ENCODE measurements at regions of chr17 and their contacts with region 1.

Region 1: GRCh38 chr17:59753522-59754467 is 46.3 kb downstream of the VMP1 start:
- DNase-seq: peak; percentile 92
- H3K4me3 ChIP-seq: no peak overlapping the region
- H3K27ac ChIP-seq: peak overlapping the region; percentile 72
- H3K4me1 ChIP-seq: peaks cover 26% of the 10 kb centered on the region
- H3K27me3 ChIP-seq: no peaks in the 10 kb centered on the region
- CTCF ChIP-seq: peak; percentile 79

Region 2: DNA sequence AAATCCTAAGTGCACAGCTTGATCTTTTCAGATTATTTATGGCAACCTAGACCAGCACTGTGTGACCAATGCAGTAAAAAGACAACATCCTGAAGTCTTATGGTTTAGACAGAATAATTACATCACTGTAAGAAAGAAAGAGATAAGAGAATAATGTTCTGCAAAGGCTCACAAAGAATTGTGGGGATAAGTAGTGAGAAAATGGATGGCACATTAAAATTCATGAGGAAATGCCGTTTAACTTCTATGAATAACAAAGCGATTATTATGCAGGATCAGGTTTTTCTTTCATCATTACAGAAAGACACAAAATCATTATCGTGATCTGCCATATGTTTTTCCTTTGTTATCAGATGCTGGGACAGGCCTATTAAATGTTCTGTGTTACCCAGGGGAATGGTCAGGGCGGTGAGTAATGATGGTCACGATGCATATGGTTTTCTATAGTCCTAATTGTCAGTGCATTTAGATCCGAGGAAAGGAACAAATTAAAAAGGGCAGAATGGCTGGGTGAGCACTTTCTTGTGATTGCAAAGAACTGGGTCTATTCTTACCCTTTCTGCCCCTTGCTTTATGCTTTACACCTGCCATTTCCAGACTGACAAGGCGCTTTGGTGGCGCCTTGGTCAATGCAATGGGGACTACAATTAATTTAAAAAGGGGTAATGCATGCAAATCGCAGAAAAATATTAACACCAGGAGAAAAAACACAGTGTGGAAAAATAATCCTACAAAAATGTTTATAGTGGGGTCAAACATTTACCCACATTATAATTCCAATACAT is 206.5 kb before region 1 on chr17:
- CTCF ChIA-PET with region 1: no interaction called
- POLR2A ChIA-PET with region 1: no interaction called
- intact Hi-C with region 1: no loop called
- DNase-seq: peak; percentile 95
- H3K4me3 ChIP-seq: no peak overlapping the region
- H3K27ac ChIP-seq: no peak overlapping the region
- H3K4me1 ChIP-seq: peaks cover 10% of the 10 kb centered on the region
- H3K27me3 ChIP-seq: peaks cover 21% of the 10 kb centered on the region
- CTCF ChIP-seq: no peak

Region 3: GRCh38 chr17:59837308-59838051 is 83.7 kb after region 1 on chr17:
- CTCF ChIA-PET with region 1: interaction called, 24 read pairs
- POLR2A ChIA-PET with region 1: interaction called, 7 read pairs
- intact Hi-C with region 1: loop called (anchors 1 kb)
- DNase-seq: peak; percentile 100
- H3K4me3 ChIP-seq: peak overlapping the region; percentile 55
- H3K27ac ChIP-seq: peak overlapping the region; percentile 100
- H3K4me1 ChIP-seq: peaks cover 34% of the 10 kb centered on the region
- H3K27me3 ChIP-seq: no peaks in the 10 kb centered on the region
- CTCF ChIP-seq: no peak

Region 4: DNA sequence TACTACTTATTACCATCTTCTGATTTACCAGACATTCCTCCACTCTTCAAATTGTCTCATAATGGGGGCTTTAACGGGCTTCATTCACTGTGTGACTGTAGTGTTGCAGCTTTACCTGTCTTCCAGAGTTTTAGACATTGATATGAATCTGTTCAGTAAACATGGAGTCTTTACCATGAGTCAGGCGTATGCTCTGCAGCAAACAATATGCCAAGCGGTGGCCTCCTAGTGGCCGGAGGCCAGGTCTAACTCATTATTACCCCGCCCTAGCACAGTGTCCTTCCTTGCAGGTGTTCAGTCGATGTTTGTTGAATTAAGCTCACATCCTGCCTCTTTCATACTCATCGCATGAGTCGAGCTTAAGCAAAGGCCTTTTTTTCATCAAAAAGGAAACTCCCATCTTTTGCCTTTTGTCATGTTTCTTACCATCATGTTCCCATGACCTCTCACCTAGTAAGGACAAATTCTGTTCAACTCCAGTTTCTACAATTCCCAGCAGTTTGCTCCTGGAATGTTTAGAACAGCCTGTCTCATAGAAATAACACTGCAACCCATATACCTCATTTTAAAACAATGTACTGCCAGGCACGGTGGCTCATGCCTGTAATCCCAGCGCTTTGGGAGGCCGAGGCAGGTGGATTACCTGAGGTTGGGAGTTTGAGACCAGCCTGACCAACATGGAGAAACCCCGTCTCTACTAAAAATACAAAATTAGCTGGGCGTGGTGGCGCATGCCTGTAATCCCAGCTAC is 99.5 kb after region 1 on chr17:
- CTCF ChIA-PET with region 1: interaction called, 10 read pairs
- POLR2A ChIA-PET with region 1: no interaction called
- intact Hi-C with region 1: loop called (anchors 2 kb)
- DNase-seq: no peak
- H3K4me3 ChIP-seq: no peak overlapping the region
- H3K27ac ChIP-seq: no peak overlapping the region
- H3K4me1 ChIP-seq: peaks cover 1% of the 10 kb centered on the region
- H3K27me3 ChIP-seq: no peaks in the 10 kb centered on the region
- CTCF ChIP-seq: peak; percentile 41; the same call in 1 of the 2 replicates

Region 5: GRCh38 chr17:59867691-59868090 is 113.9 kb after region 1 on chr17:
- CTCF ChIA-PET with region 1: no interaction called
- POLR2A ChIA-PET with region 1: no interaction called
- intact Hi-C with region 1: no loop called
- DNase-seq: no peak
- H3K4me3 ChIP-seq: no peak overlapping the region
- H3K27ac ChIP-seq: no peak overlapping the region
- H3K4me1 ChIP-seq: no peaks in the 10 kb centered on the region
- H3K27me3 ChIP-seq: no peaks in the 10 kb centered on the region
- CTCF ChIP-seq: no peak

Region 6: GRCh38 chr17:59941131-59941530 is 187.3 kb after region 1 on chr17:
- CTCF ChIA-PET with region 1: interaction called, 13 read pairs
- POLR2A ChIA-PET with region 1: no interaction called
- intact Hi-C with region 1: no loop called
- DNase-seq: no peak
- H3K4me3 ChIP-seq: no peak overlapping the region
- H3K27ac ChIP-seq: no peak overlapping the region
- H3K4me1 ChIP-seq: no peaks in the 10 kb centered on the region
- H3K27me3 ChIP-seq: no peaks in the 10 kb centered on the region
- CTCF ChIP-seq: no peak